Common myeloid progenitor, CD34-positive (primary cell): ENCODE measurements at regions of chr1 and their contacts with region 1.

Region 1: DNA sequence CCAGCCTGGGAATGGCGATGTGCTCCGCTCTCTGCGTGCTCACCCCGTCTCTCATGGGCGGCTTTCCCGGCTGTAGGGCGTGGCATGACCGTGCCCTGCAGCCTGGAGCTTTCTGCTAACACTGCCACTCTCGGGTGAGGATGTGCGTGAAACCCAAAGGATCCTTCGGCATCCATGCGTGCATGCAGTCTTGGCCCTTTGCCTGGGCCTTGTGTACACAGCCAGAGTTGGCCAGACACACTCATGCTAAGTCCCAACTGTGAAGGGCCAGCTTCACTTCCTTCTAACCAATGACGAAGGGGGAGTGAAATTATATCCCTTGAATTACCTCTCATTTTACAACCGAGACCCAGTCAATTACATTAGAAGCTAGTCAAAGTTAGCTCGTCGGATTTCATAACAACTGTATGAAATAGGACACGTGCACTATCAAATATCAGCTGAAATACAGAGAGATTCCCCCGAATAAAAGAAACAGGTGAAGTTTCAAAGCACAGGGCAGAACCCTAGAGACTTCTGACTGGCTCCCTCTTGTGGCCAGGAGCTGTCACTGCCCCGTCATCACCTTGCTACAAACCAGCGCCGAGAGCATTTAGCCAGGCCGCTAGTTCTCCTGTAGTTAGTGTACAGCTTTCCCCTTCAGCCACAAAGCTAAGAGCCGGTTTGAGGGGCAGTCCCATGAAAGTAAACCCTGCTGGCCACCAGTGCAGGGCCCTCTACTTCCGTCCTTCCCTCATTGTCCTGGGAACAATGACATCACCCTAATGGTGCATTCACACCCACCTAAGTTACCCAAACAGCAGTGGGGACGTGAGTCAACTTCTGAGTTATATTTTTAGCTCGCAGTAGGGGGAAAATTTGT is 63.4 kb upstream of the COA6 start:
- DNase-seq: peak; percentile 51 to 79 (median 76)
- H3K4me3 ChIP-seq: peak overlapping the region in 2 of 7 experiments; percentile 45 to 46
- H3K27ac ChIP-seq: no peak overlapping the region
- H3K4me1 ChIP-seq: peaks cover 0 to 11% (median 5%) of the 10 kb centered on the region in 4 experiments
- H3K27me3 ChIP-seq: peaks cover 0 to 2% (median 0%) of the 10 kb centered on the region in 5 experiments

Region 2: GRCh38 chr1:234114648-234115307 is 195.1 kb before region 1 on chr1:
- CTCF ChIA-PET with region 1: interaction called, 36 read pairs
- POLR2A ChIA-PET with region 1: interaction called, 3 read pairs
- DNase-seq: peak; percentile 41 to 72 (median 70)
- H3K4me3 ChIP-seq: peak overlapping the region in 1 of 7 experiments; percentile 46
- H3K27ac ChIP-seq: no peak overlapping the region
- H3K4me1 ChIP-seq: peaks cover 0 to 3% (median 0%) of the 10 kb centered on the region in 4 experiments
- H3K27me3 ChIP-seq: peaks cover 0 to 2% (median 0%) of the 10 kb centered on the region in 5 experiments

Region 3: DNA sequence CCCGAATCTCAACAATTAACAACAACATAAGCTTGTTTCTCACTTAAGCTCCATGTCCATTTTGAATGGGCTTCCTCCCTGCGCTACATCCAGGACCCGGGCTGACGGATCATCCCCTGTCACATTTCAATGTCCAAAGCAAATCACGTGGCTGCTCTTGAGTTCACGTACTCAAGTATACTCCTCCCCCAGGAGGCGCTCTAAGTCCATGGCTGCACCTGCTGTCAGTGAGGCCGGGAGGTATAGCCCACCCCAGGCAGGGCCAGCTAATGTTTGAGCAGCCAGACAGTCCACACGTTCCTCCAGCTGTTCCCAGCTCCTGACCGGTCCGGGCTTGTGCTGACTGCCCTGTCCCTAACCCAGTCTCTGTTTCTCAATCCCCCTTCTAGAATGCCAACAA is 184.5 kb before region 1 on chr1:
- CTCF ChIA-PET with region 1: interaction called, 26 read pairs
- POLR2A ChIA-PET with region 1: interaction called, 3 read pairs
- DNase-seq: peak; percentile 52 to 67 (median 63)
- H3K4me3 ChIP-seq: no peak overlapping the region
- H3K27ac ChIP-seq: no peak overlapping the region
- H3K4me1 ChIP-seq: no peaks in the 10 kb centered on the region
- H3K27me3 ChIP-seq: peaks cover 0 to 31% (median 7%) of the 10 kb centered on the region in 5 experiments

Region 4: GRCh38 chr1:234212764-234213657 is 96.8 kb before region 1 on chr1:
- CTCF ChIA-PET with region 1: interaction called, 33 read pairs
- POLR2A ChIA-PET with region 1: no interaction called
- DNase-seq: peak; percentile 63 to 78 (median 71)
- H3K4me3 ChIP-seq: peak overlapping the region in 2 of 7 experiments; percentile 74 to 85
- H3K27ac ChIP-seq: no peak overlapping the region
- H3K4me1 ChIP-seq: peaks cover 5 to 28% (median 15%) of the 10 kb centered on the region in 4 experiments
- H3K27me3 ChIP-seq: peaks cover 0 to 21% (median 10%) of the 10 kb centered on the region in 5 experiments

Region 5: GRCh38 chr1:234326497-234327366 is 16.9 kb after region 1 on chr1:
- CTCF ChIA-PET with region 1: interaction called, 16 read pairs
- POLR2A ChIA-PET with region 1: no interaction called
- DNase-seq: peak; percentile 61 to 75 (median 70)
- H3K4me3 ChIP-seq: peak overlapping the region; percentile 54 to 87 (median 72)
- H3K27ac ChIP-seq: no peak overlapping the region
- H3K4me1 ChIP-seq: peaks cover 3 to 12% (median 9%) of the 10 kb centered on the region in 4 experiments
- H3K27me3 ChIP-seq: peaks cover 0 to 14% (median 0%) of the 10 kb centered on the region in 5 experiments

Region 6: DNA sequence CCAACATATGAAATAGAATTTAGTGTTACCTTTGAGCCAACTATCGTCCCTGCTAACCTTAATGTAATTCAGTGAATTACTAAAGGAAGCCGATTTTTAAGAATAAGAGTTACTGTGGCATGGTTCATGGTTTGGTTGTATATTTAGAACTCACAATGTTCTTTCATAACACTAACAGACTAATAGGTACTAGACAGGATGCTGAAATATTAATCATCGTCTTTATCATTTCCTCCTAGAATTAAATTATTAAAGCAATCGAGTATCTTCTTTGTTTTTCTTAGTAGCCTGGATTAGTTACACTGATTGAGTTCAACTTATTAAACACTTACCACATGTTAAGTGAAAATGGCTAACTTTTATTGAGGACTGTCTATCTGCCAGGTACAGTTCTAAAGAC is 121.4 kb after region 1 on chr1:
- CTCF ChIA-PET with region 1: no interaction called
- POLR2A ChIA-PET with region 1: no interaction called
- DNase-seq: no peak
- H3K4me3 ChIP-seq: no peak overlapping the region
- H3K27ac ChIP-seq: no peak overlapping the region
- H3K4me1 ChIP-seq: peaks cover 0 to 5% (median 0%) of the 10 kb centered on the region in 4 experiments
- H3K27me3 ChIP-seq: no peaks in the 10 kb centered on the region